CD8-positive, alpha-beta T cell (primary cell): ENCODE measurements at regions of chr5 and their contacts with region 1.

Region 1: GRCh38 chr5:7868773-7869473 is at the starts of genes FASTKD3 and MTRR:
- DNase-seq: peak; percentile 77 to 95 (median 90)
- ATAC-seq: peak; percentile 99
- H3K4me3 ChIP-seq: peak within 1 kb of the TSS; percentile 82 to 90
- H3K4me3 Mint-ChIP-seq: peak within 1 kb of the TSS; percentile 99
- H3K27ac ChIP-seq: peak within 1 kb of the TSS; percentile 67 to 70
- H3K27ac Mint-ChIP-seq: peak within 1 kb of the TSS; percentile 93
- H3K4me1 ChIP-seq: peaks cover 43% of the 10 kb centered on the region
- H3K4me1 Mint-ChIP-seq: peaks cover 71% of the 10 kb centered on the region
- H3K27me3 ChIP-seq: no peaks in the 10 kb centered on the region
- H3K27me3 Mint-ChIP-seq: no peaks in the 10 kb centered on the region
- CTCF ChIP-seq: no peak
- total RNA-seq, gene FASTKD3: 4.3 to 7.1 TPM
- total RNA-seq, gene MTRR: 67.8 to 76.8 TPM

Region 2: GRCh38 chr5:6632917-6633468 is 1235.9 kb before region 1 on chr5 and contains the starts of genes NSUN2 and SRD5A1:
- CTCF ChIA-PET with region 1: no interaction called
- POLR2A ChIA-PET with region 1: no interaction called
- intact Hi-C with region 1: loop called (anchors 5 to 10 kb)
- DNase-seq: peak; percentile 81 to 98 (median 90)
- ATAC-seq: peak; percentile 89
- H3K4me3 ChIP-seq: peak within 1 kb of the TSS; percentile 75 to 83
- H3K4me3 Mint-ChIP-seq: peak within 1 kb of the TSS; percentile 85
- H3K27ac ChIP-seq: peak within 1 kb of the TSS; percentile 92 to 100
- H3K27ac Mint-ChIP-seq: peak within 1 kb of the TSS; percentile 99
- H3K4me1 ChIP-seq: peaks cover 22% of the 10 kb centered on the region
- H3K4me1 Mint-ChIP-seq: peaks cover 52% of the 10 kb centered on the region
- H3K27me3 ChIP-seq: no peaks in the 10 kb centered on the region
- H3K27me3 Mint-ChIP-seq: no peaks in the 10 kb centered on the region
- CTCF ChIP-seq: no peak
- total RNA-seq, gene NSUN2: 69.6 to 74.3 TPM
- total RNA-seq, gene SRD5A1: 2.1 to 2.8 TPM

Region 3: GRCh38 chr5:6712577-6713275 is 1156.2 kb before region 1 on chr5:
- CTCF ChIA-PET with region 1: no interaction called
- POLR2A ChIA-PET with region 1: no interaction called
- intact Hi-C with region 1: loop called (anchors 5 to 10 kb)
- DNase-seq: peak in 8 of 9 experiments; percentile 95 to 99 (median 96)
- ATAC-seq: peak; percentile 76
- H3K4me3 ChIP-seq: peak overlapping the region; percentile 83 to 91
- H3K4me3 Mint-ChIP-seq: peak overlapping the region; percentile 89
- H3K27ac ChIP-seq: peak overlapping the region; percentile 77 to 86
- H3K27ac Mint-ChIP-seq: peak overlapping the region; percentile 92
- H3K4me1 ChIP-seq: peaks cover 28% of the 10 kb centered on the region
- H3K4me1 Mint-ChIP-seq: peaks cover 39% of the 10 kb centered on the region
- H3K27me3 ChIP-seq: peaks cover 0 to 2% of the 10 kb centered on the region in 2 experiments
- H3K27me3 Mint-ChIP-seq: no peaks in the 10 kb centered on the region
- CTCF ChIP-seq: no peak

Region 4: GRCh38 chr5:7770436-7770835 is 98.5 kb before region 1 on chr5:
- CTCF ChIA-PET with region 1: no interaction called
- POLR2A ChIA-PET with region 1: no interaction called
- intact Hi-C with region 1: no loop called
- DNase-seq: no peak
- ATAC-seq: no peak
- H3K4me3 ChIP-seq: no peak overlapping the region
- H3K4me3 Mint-ChIP-seq: no peak overlapping the region
- H3K27ac ChIP-seq: no peak overlapping the region
- H3K27ac Mint-ChIP-seq: no peak overlapping the region
- H3K4me1 ChIP-seq: no peaks in the 10 kb centered on the region
- H3K4me1 Mint-ChIP-seq: no peaks in the 10 kb centered on the region
- H3K27me3 ChIP-seq: no peaks in the 10 kb centered on the region
- H3K27me3 Mint-ChIP-seq: peaks cover 19% of the 10 kb centered on the region
- CTCF ChIP-seq: no peak

Region 5: GRCh38 chr5:7850395-7851239 is 18.3 kb before region 1 on chr5 and contains the start of gene CFAP90:
- CTCF ChIA-PET with region 1: interaction called, 4 read pairs
- POLR2A ChIA-PET with region 1: interaction called, 10 read pairs
- intact Hi-C with region 1: no loop called
- DNase-seq: peak in 4 of 9 experiments; percentile 17 to 44 (median 32)
- ATAC-seq: peak; percentile 62
- H3K4me3 ChIP-seq: peak within 1 kb of the TSS; percentile 41 to 46
- H3K4me3 Mint-ChIP-seq: peak within 1 kb of the TSS; percentile 86
- H3K27ac ChIP-seq: no peak within 1 kb of the TSS
- H3K27ac Mint-ChIP-seq: peak within 1 kb of the TSS; percentile 17
- H3K4me1 ChIP-seq: peaks cover 12% of the 10 kb centered on the region
- H3K4me1 Mint-ChIP-seq: peaks cover 26% of the 10 kb centered on the region
- H3K27me3 ChIP-seq: peaks cover 0 to 3% of the 10 kb centered on the region in 2 experiments
- H3K27me3 Mint-ChIP-seq: peaks cover 22% of the 10 kb centered on the region
- CTCF ChIP-seq: no peak
- total RNA-seq, gene CFAP90: not detected

Region 6: DNA sequence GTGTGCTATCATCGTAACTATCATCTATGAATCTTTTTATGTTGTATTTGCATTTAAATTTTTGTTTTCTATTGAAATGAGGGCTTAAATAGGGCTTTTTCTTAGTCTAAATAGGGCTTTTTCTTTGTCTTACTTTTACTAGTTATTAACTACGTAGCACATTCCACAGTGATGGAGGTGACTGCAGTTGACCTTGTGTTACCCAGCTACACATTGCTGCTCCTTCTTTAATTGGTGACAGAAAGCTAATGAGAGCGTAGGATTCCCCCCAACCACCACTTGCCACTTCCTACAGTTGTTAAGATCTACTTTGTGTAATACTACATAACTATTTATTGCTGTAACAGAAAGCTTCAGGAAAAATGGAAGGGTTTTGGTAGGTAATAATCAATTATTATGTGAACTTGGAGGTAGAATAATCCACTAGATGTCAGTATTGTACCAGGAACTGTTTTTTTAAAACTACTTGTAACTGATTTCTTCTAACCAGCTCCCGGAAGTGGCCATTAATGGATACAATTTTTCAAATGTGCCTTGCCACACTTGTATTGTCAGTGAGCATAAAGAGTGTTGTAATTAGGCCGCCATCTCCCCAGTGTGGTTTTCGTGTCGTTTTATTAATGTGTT is 18.0 kb after region 1 on chr5:
- CTCF ChIA-PET with region 1: interaction called, 13 read pairs
- POLR2A ChIA-PET with region 1: interaction called, 10 read pairs
- intact Hi-C with region 1: no loop called
- DNase-seq: peak in 2 of 9 experiments; percentile 34 to 61
- ATAC-seq: no peak
- H3K4me3 ChIP-seq: no peak overlapping the region
- H3K4me3 Mint-ChIP-seq: no peak overlapping the region
- H3K27ac ChIP-seq: no peak overlapping the region
- H3K27ac Mint-ChIP-seq: no peak overlapping the region
- H3K4me1 ChIP-seq: no peaks in the 10 kb centered on the region
- H3K4me1 Mint-ChIP-seq: peaks cover 8% of the 10 kb centered on the region
- H3K27me3 ChIP-seq: no peaks in the 10 kb centered on the region
- H3K27me3 Mint-ChIP-seq: no peaks in the 10 kb centered on the region
- CTCF ChIP-seq: peak; percentile 58

Region 7: DNA sequence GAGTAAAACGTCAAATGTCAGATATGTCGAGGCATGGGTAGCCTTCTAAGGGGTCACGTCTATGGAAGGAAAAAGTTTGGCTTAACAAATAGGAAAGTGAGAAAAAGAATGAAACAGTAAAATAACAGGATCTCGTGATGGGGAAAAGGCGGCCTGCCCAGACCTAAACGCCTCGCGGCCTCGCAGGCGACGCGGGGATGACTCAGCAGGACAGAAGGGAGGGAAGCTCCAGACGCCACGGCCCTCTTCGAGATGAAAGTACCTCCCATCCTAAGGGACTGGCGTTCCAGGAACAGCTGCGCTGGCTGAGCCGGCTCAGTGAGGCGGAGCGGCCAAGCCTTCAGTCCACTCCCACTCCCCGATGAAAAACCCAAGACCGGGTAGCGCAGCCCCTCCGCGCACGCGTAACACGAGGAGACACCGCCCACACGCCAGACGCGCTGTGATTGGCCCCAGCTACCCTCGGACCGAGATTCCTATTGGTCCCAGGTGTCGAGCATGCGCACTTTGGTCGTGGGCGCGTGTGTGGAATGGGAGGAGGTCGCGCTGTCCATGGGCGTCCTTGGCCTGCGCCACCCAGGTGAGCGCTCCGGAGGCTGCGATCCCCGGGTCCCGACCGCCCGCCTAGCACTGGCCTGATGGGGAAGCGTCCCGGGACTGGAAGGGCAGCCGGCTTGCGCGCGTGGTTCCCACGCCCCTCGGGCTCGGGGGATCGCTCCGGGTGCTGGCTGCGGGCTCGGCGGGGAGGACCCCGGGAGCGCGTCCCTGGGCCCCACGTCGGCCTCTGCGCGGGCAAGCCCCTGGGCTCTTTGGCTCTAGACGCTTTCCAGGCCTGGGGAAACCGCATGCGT is 588.5 kb after region 1 on chr5:
- CTCF ChIA-PET with region 1: no interaction called
- POLR2A ChIA-PET with region 1: no interaction called
- intact Hi-C with region 1: loop called in 1 of 2 experiments (anchors 5 kb)
- DNase-seq: peak; percentile 50 to 89 (median 78)
- ATAC-seq: peak; percentile 93
- H3K4me3 ChIP-seq: peak overlapping the region; percentile 60 to 75
- H3K4me3 Mint-ChIP-seq: peak overlapping the region; percentile 83
- H3K27ac ChIP-seq: peak overlapping the region; percentile 38 to 39
- H3K27ac Mint-ChIP-seq: peak overlapping the region; percentile 70
- H3K4me1 ChIP-seq: peaks cover 7% of the 10 kb centered on the region
- H3K4me1 Mint-ChIP-seq: peaks cover 17% of the 10 kb centered on the region
- H3K27me3 ChIP-seq: no peaks in the 10 kb centered on the region
- H3K27me3 Mint-ChIP-seq: no peaks in the 10 kb centered on the region
- CTCF ChIP-seq: no peak